ENCODE measurements at regions of chr4 and their contacts with region 1.

Region 1: DNA sequence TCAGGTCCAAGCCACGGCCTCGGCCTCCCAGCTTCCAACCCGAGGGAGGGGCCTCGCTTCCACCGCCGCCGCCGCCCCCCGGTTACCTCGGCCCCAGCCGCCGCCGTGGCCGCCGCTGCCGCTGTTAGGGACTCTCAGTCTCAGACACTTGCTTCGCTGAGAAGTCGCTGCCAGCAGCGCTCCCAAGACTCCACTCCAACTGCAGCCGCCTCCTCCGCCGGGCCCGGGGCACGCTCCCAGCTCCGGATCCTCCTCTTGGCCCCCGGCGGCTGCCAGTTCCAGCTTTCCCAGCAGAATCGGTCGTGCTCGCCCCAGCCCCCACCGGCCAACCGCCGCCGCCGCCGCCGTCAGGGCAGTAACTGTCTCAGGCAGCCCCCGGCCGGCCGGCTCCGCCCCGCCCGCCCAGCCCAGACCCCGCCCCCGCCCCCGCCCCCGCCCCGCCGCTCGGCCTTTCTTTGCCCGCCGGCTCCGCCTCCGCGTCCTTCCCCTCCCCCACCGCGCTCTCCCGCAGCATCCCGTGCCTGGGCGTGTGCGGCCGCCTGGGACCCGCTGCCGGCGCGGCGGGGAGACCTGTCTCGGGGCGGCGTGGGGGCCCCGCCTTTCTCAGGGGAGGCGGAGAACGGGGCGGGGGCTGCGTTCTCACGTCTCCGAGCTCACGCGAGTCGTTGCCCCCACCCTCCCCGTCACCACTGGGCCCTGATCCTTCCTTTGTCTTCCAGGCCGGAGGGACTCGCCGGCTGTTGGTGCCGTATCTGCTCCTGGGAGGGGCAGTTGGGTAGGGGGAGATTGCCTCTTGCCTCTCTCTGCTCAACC is at the start of gene ANKRD50:
- DNase-seq: peak; percentile 96
- H3K4me3 ChIP-seq: peak within 1 kb of the TSS; percentile 62 to 97 (median 78)
- H3K27ac ChIP-seq: peak within 1 kb of the TSS; percentile 98
- H3K4me1 ChIP-seq: peaks cover 25% of the 10 kb centered on the region
- H3K27me3 ChIP-seq: no peaks in the 10 kb centered on the region
- CTCF ChIP-seq: no peak
- POLR2A ChIP-seq: peak; percentile 68
- total RNA-seq, gene ANKRD50: 63.6 and 68.9 TPM in 2 replicates

Region 2: DNA sequence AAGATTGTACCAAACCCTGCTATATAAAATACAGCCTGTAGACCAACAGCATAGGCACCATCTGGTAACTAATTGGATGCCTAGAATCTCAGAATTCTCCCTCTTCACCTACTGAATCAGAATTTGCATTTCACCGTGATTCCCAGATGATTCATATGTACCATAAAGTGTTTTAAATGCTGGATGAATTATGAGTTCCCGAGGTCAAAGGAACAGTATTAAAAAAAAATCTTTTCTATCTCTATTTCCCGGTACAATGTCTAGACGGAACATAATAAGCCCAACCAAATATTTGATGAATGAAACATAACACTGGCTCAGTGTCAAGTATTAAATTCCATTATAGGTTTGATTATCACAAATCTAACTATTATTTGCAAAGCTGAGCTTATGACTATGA is 280.1 kb before region 1 on chr4:
- CTCF ChIA-PET with region 1: no interaction called
- POLR2A ChIA-PET with region 1: interaction called, 3 read pairs
- dilution Hi-C with region 1: no loop called
- intact Hi-C with region 1: loop called (anchors 1 kb)
- DNase-seq: peak; percentile 94
- H3K4me3 ChIP-seq: peak overlapping the region in 1 of 3 experiments; percentile 24
- H3K27ac ChIP-seq: peak overlapping the region; percentile 100
- H3K4me1 ChIP-seq: peaks cover 75% of the 10 kb centered on the region
- H3K27me3 ChIP-seq: no peaks in the 10 kb centered on the region
- CTCF ChIP-seq: no peak
- POLR2A ChIP-seq: no peak

Region 3: GRCh38 chr4:124499261-124499660 is 213.3 kb before region 1 on chr4:
- CTCF ChIA-PET with region 1: no interaction called
- POLR2A ChIA-PET with region 1: no interaction called
- dilution Hi-C with region 1: no loop called
- intact Hi-C with region 1: no loop called
- DNase-seq: peak; percentile 25
- H3K4me3 ChIP-seq: no peak overlapping the region
- H3K27ac ChIP-seq: no peak overlapping the region
- H3K4me1 ChIP-seq: no peaks in the 10 kb centered on the region
- H3K27me3 ChIP-seq: no peaks in the 10 kb centered on the region
- CTCF ChIP-seq: no peak
- POLR2A ChIP-seq: no peak

Region 4: DNA sequence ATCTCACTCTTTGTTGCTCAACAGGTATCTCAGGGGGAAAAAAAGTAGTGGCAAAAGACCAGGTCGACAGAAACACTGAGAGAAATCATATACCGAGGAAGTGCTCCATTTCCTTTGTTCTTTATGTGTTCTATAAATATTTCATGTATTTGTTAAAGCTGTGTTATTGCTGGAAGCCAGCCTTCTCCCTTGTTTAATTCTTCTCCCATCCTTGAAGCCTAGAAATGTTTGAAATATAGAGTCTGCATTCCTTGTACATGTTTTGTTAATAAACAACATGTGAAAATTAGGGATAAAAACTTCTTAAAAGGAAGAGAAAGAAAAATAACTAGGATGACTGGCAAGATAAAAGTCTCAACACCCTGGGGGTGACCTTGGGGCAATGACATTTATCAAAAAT is 186.2 kb before region 1 on chr4:
- CTCF ChIA-PET with region 1: no interaction called
- POLR2A ChIA-PET with region 1: no interaction called
- dilution Hi-C with region 1: no loop called
- intact Hi-C with region 1: loop called (anchors 2 kb)
- DNase-seq: peak; percentile 83
- H3K4me3 ChIP-seq: no peak overlapping the region
- H3K27ac ChIP-seq: peak overlapping the region; percentile 64
- H3K4me1 ChIP-seq: peaks cover 19% of the 10 kb centered on the region
- H3K27me3 ChIP-seq: no peaks in the 10 kb centered on the region
- CTCF ChIP-seq: no peak
- POLR2A ChIP-seq: no peak

Region 5: GRCh38 chr4:124940387-124940786 is 227.8 kb after region 1 on chr4:
- CTCF ChIA-PET with region 1: no interaction called
- POLR2A ChIA-PET with region 1: interaction called, 5 read pairs
- dilution Hi-C with region 1: no loop called
- intact Hi-C with region 1: loop called (anchors 1 kb)
- DNase-seq: peak; percentile 97
- H3K4me3 ChIP-seq: no peak overlapping the region
- H3K27ac ChIP-seq: peak overlapping the region; percentile 98
- H3K4me1 ChIP-seq: peaks cover 38% of the 10 kb centered on the region
- H3K27me3 ChIP-seq: no peaks in the 10 kb centered on the region
- CTCF ChIP-seq: no peak
- POLR2A ChIP-seq: peak; percentile 29

Region 6: GRCh38 chr4:125198916-125199315 is 486.3 kb after region 1 on chr4:
- CTCF ChIA-PET with region 1: no interaction called
- POLR2A ChIA-PET with region 1: no interaction called
- dilution Hi-C with region 1: no loop called
- intact Hi-C with region 1: loop called (anchors 2 kb)
- DNase-seq: peak; percentile 84
- H3K4me3 ChIP-seq: no peak overlapping the region
- H3K27ac ChIP-seq: peak overlapping the region; percentile 90
- H3K4me1 ChIP-seq: peaks cover 18% of the 10 kb centered on the region
- H3K27me3 ChIP-seq: no peaks in the 10 kb centered on the region
- CTCF ChIP-seq: no peak
- POLR2A ChIP-seq: no peak

Region 7: DNA sequence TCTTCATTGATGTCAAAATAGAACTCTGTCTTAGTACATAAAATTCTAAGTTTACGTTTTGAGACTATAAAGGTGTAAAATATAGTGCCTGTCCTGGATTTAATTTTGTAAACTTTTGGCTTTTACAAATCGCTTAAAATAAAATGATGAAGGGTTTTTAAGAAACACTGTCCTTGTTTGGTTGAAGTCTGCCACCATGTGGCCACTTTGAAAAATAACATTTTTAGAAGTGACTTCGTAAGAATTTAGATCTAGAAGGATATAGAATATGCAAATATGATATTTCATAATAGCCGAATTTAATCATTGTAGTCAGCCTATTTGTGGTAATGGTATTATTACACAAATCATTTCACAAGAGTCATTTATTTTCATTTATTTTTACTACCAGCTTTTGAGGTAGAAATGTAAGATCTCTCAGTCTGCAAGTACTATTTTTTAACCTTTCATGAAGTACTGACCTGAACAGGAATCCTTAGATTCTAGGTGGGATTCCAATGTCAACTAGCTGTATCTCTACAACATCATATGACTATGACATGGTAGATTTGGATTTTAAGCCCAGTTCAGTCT is 571.2 kb after region 1 on chr4:
- CTCF ChIA-PET with region 1: interaction called, 6 read pairs
- POLR2A ChIA-PET with region 1: no interaction called
- dilution Hi-C with region 1: no loop called
- intact Hi-C with region 1: loop called (anchors 2 kb)
- DNase-seq: peak; percentile 54
- H3K4me3 ChIP-seq: no peak overlapping the region
- H3K27ac ChIP-seq: no peak overlapping the region
- H3K4me1 ChIP-seq: peaks cover 4% of the 10 kb centered on the region
- H3K27me3 ChIP-seq: no peaks in the 10 kb centered on the region
- CTCF ChIP-seq: peak; percentile 8 to 26
- POLR2A ChIP-seq: no peak

Measured in endothelial cell of umbilical vein (primary cell).